ENCODE measurements at regions of chr17 and their contacts with region 1.

Region 1: GRCh38 chr17:794876-795275 is 12.7 kb downstream of the MRM3 start:
- DNase-seq: peak; percentile 49
- H3K27ac ChIP-seq: peak overlapping the region; percentile 98
- CTCF ChIP-seq: peak; percentile 60

Region 2: DNA sequence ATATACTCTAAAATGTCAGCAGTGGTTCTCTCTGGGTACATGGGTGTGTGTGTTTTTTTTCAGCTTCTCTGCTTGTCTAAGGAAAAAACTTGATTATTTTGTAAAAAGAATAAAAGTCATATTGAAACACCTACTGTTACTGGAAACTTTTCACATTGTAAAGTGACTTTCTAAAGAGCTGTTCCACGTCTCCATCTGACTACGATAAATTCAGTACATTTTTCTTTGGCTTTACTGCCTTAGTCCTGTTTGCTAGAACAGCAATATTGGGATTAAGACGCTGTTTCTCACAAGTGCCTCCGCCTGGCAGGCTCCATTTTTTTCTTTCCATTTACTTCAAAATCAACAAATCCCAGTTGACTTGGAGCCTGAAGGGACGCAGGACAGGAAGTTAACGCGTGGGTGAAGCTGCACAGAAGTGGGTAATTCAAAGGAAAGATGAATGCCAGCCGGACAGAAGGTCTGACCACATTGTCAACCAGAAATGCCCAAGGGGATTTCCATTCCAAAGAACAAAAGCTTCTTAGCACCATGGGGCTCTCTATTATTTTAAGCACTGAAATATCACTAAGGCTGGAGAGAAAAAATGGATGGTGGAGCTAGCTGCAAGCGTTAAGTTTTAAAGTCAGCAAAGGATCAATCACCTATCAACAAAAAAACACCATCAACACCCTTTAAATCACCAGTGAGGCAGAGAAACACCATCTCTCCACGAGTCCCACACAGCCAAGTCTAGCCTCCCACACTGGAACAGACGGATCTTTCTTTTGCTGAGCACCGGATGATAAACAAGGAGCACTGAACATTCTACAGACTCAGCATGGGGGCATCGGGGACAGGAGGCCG is 21.2 kb before region 1 on chr17:
- CTCF ChIA-PET with region 1: no interaction called
- POLR2A ChIA-PET with region 1: no interaction called
- DNase-seq: no peak
- H3K27ac ChIP-seq: 0 out of 2 replicates have a peak overlapping the region, but pooled peaks have one; percentile 15
- CTCF ChIP-seq: no peak

Region 3: GRCh38 chr17:807523-808294 is 12.8 kb after region 1 on chr17:
- CTCF ChIA-PET with region 1: no interaction called
- POLR2A ChIA-PET with region 1: no interaction called
- DNase-seq: no peak
- H3K27ac ChIP-seq: peak overlapping the region; percentile 16; the same call in 1 of the 2 replicates
- CTCF ChIP-seq: no peak

Region 4: DNA sequence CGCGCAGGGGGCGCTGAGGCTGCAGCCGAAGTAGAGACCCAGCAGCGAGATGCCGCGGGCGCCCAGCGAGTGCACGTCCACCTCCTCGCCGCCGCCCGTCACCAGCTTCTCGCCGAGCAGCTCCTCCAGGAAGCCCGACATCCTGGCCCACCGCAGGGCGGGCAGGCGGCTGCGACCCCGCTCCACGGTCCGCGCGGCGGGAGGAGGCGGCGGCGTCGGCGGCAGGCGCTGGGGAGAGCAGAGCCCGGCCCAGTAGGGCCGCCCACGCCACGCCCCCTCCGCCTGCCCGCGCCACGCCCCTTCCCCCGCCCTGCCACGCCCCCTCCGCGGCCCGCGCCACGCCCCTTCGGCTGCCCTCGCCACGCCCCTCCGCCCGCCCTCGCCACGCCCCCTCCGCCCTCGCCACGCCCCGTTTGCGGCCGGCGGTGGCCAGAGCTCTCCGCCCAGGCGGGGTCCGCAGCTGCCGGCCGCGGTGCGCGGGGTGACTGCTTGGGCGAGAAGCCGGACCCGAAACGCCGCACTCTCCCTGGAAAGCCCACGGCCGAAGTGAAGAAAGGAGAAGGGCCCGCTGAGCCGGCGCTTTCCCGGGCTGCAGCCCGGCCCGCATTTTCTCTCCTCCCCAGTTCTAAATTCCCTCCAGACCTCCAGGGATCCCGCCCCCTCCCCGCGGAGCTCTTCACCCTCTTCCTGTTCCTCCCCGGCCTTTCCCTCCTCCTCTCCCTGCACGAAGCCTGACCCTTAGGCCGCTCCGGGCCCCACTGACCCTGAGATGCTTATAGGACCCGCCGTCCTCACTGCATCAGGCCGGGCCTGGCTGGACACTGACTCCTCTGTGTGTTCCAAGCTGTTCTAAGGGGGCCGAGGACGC is 184.9 kb after region 1 on chr17 and contains the start of gene NXN:
- CTCF ChIA-PET with region 1: interaction called, 32 read pairs
- POLR2A ChIA-PET with region 1: interaction called, 4 read pairs
- DNase-seq: peak; percentile 85
- H3K27ac ChIP-seq: peak within 1 kb of the TSS; percentile 91
- CTCF ChIP-seq: 0 out of 2 replicates have a peak, but pooled peaks have one; percentile 1

Measured in RWPE1 (cell line).